ENCODE measurements at regions of chr14 and their contacts with region 1.

Region 1: DNA sequence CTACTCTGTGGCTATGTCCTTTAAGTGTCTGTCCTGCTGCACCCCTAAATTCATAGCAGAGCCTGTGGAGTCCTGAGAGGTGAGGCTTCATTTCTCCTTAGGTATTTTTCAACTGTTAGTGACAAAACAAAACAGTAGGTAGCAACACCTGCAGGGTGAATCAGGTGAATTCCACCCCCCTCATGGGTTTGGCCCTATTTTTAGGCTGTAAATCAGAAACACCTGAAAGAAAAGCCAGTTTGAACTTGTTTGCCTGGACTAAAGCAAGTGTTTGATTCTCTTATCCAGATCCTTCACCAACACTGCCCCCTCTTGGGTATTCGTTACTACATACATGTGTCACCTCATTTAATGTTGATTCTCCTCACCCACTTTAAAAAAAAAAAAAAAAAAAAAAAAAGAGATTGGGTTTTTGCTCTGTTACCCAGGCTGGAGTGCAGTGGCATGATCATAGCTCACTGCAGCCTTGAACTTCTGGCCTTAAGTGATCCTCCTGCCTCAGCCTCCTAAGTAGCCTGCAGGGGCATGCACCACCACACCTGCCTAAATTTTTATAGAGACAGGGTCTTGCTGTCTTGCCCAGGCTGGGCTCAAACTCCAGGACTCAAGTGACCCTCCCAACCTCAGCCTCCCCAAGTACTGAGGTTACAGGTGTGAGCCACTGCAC is 10.3 kb downstream of the TBPL2 start:
- DNase-seq: peak; percentile 57
- ATAC-seq: peak; percentile 64
- H3K4me3 ChIP-seq: no peak overlapping the region
- H3K4me3 Mint-ChIP-seq: no peak overlapping the region
- H3K27ac ChIP-seq: no peak overlapping the region
- H3K27ac Mint-ChIP-seq: no peak overlapping the region
- H3K4me1 ChIP-seq: peaks cover 0 to 3% of the 10 kb centered on the region in 2 donors
- H3K4me1 Mint-ChIP-seq: peaks cover 9% of the 10 kb centered on the region
- H3K27me3 ChIP-seq: no peaks in the 10 kb centered on the region
- H3K27me3 Mint-ChIP-seq: peaks cover 7% of the 10 kb centered on the region
- CTCF ChIP-seq: peak; percentile 34

Region 2: DNA sequence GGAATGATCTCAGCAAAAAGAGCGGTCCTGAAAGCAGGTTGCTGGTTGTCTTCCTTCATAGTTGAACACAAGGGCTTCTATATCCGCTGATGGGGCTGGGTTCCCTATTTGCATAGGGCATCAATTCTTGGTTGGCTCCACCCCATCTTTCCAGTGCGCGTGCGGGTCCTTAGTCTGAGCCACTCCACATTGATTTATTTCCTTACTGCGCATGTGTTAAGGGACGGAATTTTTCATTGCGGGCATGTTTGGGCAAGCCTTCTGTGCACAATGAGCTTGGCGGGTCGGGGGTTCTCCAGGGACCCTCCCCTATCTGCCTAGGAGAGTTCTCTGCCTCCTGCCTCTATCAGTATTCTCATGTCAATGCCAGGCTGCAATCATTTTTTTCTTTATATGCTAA is 217.5 kb before region 1 on chr14:
- CTCF ChIA-PET with region 1: interaction called, 6 read pairs
- POLR2A ChIA-PET with region 1: no interaction called
- intact Hi-C with region 1: loop called (anchors 2 kb)
- DNase-seq: no peak
- ATAC-seq: no peak
- H3K4me3 ChIP-seq: no peak overlapping the region
- H3K4me3 Mint-ChIP-seq: no peak overlapping the region
- H3K27ac ChIP-seq: no peak overlapping the region
- H3K27ac Mint-ChIP-seq: no peak overlapping the region
- H3K4me1 ChIP-seq: no peaks in the 10 kb centered on the region
- H3K4me1 Mint-ChIP-seq: peaks cover 2% of the 10 kb centered on the region
- H3K27me3 ChIP-seq: no peaks in the 10 kb centered on the region
- H3K27me3 Mint-ChIP-seq: no peaks in the 10 kb centered on the region
- CTCF ChIP-seq: no peak

Region 3: GRCh38 chr14:55245657-55246268 is 184.4 kb before region 1 on chr14:
- CTCF ChIA-PET with region 1: interaction called, 4 read pairs
- POLR2A ChIA-PET with region 1: no interaction called
- intact Hi-C with region 1: loop called (anchors 1 kb)
- DNase-seq: peak; percentile 43
- ATAC-seq: peak; percentile 60
- H3K4me3 ChIP-seq: no peak overlapping the region
- H3K4me3 Mint-ChIP-seq: no peak overlapping the region
- H3K27ac ChIP-seq: no peak overlapping the region
- H3K27ac Mint-ChIP-seq: no peak overlapping the region
- H3K4me1 ChIP-seq: no peaks in the 10 kb centered on the region
- H3K4me1 Mint-ChIP-seq: no peaks in the 10 kb centered on the region
- H3K27me3 ChIP-seq: no peaks in the 10 kb centered on the region
- H3K27me3 Mint-ChIP-seq: peaks cover 36% of the 10 kb centered on the region
- CTCF ChIP-seq: peak; percentile 70

Region 4: GRCh38 chr14:55446218-55446654 is 16.1 kb after region 1 on chr14:
- CTCF ChIA-PET with region 1: interaction called, 12 read pairs
- POLR2A ChIA-PET with region 1: no interaction called
- intact Hi-C with region 1: no loop called
- DNase-seq: peak; percentile 69
- ATAC-seq: no peak
- H3K4me3 ChIP-seq: no peak overlapping the region
- H3K4me3 Mint-ChIP-seq: no peak overlapping the region
- H3K27ac ChIP-seq: no peak overlapping the region
- H3K27ac Mint-ChIP-seq: no peak overlapping the region
- H3K4me1 ChIP-seq: no peaks in the 10 kb centered on the region
- H3K4me1 Mint-ChIP-seq: no peaks in the 10 kb centered on the region
- H3K27me3 ChIP-seq: no peaks in the 10 kb centered on the region
- H3K27me3 Mint-ChIP-seq: no peaks in the 10 kb centered on the region
- CTCF ChIP-seq: peak; percentile 82

Region 5: DNA sequence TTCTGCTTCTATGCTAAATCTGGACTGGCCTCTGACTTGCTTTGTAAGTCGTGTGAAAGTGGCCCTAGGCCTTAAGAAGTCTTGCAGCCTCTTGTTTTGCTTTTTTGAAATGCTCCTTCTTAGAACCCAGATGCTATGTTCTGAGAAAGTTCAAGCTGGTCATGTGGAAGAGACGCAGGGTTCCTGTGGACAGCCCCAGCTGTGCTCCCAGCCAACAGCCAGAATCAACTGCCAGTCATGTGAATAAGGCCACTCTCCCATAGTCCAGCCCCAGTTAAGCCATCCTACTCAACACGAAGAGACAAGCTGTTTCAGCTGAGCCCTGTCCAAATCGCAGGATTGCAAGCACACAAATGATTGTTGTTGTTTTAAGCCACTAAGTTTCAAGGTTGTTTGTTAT is 47.5 kb after region 1 on chr14:
- CTCF ChIA-PET with region 1: no interaction called
- POLR2A ChIA-PET with region 1: no interaction called
- intact Hi-C with region 1: no loop called
- DNase-seq: no peak
- ATAC-seq: no peak
- H3K4me3 ChIP-seq: no peak overlapping the region
- H3K4me3 Mint-ChIP-seq: no peak overlapping the region
- H3K27ac ChIP-seq: no peak overlapping the region
- H3K27ac Mint-ChIP-seq: no peak overlapping the region
- H3K4me1 ChIP-seq: no peaks in the 10 kb centered on the region
- H3K4me1 Mint-ChIP-seq: no peaks in the 10 kb centered on the region
- H3K27me3 ChIP-seq: no peaks in the 10 kb centered on the region
- H3K27me3 Mint-ChIP-seq: no peaks in the 10 kb centered on the region
- CTCF ChIP-seq: no peak

Region 6: DNA sequence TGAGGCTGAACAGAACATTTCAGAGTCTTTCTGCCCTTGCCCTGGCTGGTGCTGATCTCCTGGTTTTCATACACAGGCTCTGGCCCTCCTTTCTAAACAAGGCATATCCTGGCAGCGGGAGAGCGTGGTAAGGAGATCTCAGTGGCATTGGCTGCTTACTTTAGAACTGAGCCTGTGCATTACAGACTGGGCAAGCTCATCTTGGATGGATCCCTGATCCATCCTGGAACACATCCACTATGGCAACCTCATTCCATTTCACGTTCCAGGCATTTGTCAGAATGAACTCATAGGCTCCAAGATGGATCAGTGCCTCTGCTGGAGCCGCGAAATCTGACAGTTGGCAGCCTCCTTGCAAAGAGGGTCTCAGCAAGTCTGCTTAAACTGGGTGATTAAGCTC is 463.5 kb after region 1 on chr14:
- CTCF ChIA-PET with region 1: no interaction called
- POLR2A ChIA-PET with region 1: no interaction called
- intact Hi-C with region 1: no loop called
- DNase-seq: no peak
- ATAC-seq: no peak
- H3K4me3 ChIP-seq: no peak overlapping the region
- H3K4me3 Mint-ChIP-seq: no peak overlapping the region
- H3K27ac ChIP-seq: no peak overlapping the region
- H3K27ac Mint-ChIP-seq: no peak overlapping the region
- H3K4me1 ChIP-seq: no peaks in the 10 kb centered on the region
- H3K4me1 Mint-ChIP-seq: no peaks in the 10 kb centered on the region
- H3K27me3 ChIP-seq: peaks cover 0 to 3% (median 0%) of the 10 kb centered on the region in 4 experiments
- H3K27me3 Mint-ChIP-seq: peaks cover 8% of the 10 kb centered on the region
- CTCF ChIP-seq: no peak